Activated naive CD4-positive, alpha-beta T cell treated with anti-CD3 and anti-CD28 coated beads for 36 hours (primary cell): ENCODE measurements at regions of chr7 and their contacts with region 1.

Region 1: DNA sequence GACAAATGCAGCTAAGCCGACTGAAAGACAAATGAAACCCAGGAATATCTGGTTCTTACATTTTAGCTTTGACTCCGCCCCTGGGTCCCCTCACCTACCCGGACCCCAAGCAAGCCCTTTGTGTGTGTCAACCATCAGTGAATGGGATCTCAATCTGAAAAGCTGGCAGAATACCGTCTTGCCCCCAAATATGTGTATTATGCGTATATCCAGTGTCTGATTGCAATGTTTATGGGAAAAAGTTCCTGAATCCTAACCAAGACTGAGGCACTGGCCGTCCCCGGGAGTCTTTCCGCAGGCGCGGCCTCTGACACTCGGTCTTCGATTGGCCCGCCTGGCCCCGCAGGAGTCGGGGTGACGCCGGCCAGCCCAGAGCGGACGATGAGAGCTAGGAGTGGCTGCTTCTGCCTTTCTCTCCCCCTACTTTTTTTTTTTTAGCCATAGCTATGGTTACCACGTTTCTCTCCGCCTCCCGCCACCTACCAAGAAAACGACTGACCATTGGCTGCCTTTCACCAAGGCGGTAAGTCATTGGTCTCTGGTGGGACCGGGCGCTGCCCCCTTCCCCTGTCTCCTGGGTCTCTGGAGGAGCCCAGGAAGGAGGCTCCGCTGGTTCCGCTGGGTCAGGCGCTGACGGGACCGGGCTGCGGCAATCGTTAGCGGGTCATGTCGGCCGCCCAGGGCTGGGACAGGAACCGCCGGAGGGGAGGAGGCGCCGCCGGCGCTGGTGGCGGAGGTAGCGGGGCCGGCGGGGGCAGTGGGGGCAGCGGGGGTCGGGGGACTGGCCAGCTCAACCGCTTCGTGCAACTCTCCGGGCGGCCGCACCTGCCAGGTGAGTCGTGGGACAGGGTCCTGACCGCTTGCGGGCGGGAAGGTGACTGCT is at the start of gene KLHDC10:
- DNase-seq: peak; percentile 98
- H3K4me3 Mint-ChIP-seq: peak within 1 kb of the TSS; percentile 79
- H3K27ac Mint-ChIP-seq: peak within 1 kb of the TSS; percentile 70
- H3K4me1 Mint-ChIP-seq: peaks cover 38% of the 10 kb centered on the region
- H3K27me3 Mint-ChIP-seq: no peaks in the 10 kb centered on the region
- total RNA-seq, gene KLHDC10: 11.6 to 12.9 TPM

Region 2: DNA sequence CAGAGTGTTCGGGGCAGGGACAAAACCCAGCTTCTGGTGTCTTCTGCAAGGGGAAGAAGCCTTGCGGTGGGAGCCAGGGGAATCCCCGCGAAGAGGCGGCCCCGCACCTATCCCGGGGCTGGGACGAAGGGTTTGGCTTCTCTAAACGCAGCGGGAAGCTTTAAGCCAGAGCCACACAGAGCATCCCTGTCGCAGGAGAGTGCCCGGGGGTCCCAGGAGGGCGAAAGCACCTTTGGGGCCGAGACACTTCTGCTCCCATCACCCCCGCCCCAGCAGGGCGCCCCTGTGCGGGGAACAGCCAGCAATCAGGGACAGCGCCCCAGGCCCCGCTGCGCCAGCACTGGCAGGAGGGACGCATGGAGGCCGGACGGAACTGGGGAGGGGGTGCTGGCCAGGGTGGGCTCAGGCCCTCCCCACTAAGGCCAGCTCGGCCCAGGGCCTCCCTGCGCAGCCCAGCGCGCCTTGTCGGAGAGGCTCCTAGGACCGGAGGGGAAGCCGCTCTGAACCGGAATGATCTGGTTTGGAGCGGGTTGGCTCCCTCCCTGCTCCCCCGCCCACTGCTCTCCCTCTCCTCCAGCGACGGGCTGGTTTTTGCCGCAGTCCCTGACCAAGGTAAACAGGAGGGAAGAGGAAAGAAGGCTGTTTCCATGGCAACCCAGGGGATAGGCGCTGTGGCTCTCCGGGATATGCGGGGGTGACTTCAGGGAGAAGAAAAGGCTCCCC is 71.1 kb after region 1 on chr7:
- CTCF ChIA-PET with region 1: interaction called, 5 read pairs
- intact Hi-C with region 1: loop called (anchors 2 kb)
- DNase-seq: peak; percentile 71
- H3K4me3 Mint-ChIP-seq: peak overlapping the region; percentile 59
- H3K27ac Mint-ChIP-seq: peak overlapping the region; percentile 41
- H3K4me1 Mint-ChIP-seq: peaks cover 9% of the 10 kb centered on the region
- H3K27me3 Mint-ChIP-seq: no peaks in the 10 kb centered on the region

Region 3: DNA sequence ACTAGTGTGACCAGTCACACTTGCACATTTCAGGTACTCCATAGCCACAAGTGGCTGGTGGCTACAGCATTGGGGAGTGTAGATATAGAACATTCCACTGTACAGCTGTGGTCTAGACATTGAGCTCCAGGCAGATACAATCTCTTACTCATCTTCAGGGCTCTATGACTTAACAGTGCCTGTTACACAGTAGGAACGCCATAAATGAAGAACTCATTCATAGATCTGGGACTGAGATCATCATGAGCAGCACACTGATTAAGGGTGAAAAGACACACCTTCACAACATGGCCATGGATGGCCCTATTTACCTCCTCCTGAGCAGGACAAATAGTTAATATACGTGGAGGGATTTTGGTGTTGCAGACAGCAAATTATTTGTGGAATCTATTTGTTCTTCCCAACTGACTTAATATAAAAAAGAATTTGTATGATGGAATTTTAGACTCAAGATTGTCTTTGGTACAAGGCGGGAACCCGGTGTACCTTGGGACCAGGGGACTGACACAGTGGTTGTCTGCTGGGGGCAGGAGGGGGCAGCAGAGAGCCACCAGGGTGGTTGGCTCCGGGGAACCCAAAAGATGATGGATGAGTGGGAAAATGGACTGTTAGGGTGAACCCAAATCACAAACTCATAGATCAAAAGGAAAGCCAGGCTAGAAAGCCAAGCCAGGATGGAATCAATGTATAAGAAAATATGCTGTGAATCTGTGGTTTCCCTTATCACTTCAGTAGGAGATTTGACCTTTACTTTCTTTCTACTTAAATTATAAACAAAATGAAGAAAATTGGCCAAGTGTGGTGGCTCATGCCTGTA is 172.2 kb after region 1 on chr7:
- CTCF ChIA-PET with region 1: interaction called, 8 read pairs
- intact Hi-C with region 1: loop called (anchors 2 kb)
- DNase-seq: peak; percentile 76
- H3K4me3 Mint-ChIP-seq: no peak overlapping the region
- H3K27ac Mint-ChIP-seq: no peak overlapping the region
- H3K4me1 Mint-ChIP-seq: peaks cover 9% of the 10 kb centered on the region
- H3K27me3 Mint-ChIP-seq: no peaks in the 10 kb centered on the region

Region 4: DNA sequence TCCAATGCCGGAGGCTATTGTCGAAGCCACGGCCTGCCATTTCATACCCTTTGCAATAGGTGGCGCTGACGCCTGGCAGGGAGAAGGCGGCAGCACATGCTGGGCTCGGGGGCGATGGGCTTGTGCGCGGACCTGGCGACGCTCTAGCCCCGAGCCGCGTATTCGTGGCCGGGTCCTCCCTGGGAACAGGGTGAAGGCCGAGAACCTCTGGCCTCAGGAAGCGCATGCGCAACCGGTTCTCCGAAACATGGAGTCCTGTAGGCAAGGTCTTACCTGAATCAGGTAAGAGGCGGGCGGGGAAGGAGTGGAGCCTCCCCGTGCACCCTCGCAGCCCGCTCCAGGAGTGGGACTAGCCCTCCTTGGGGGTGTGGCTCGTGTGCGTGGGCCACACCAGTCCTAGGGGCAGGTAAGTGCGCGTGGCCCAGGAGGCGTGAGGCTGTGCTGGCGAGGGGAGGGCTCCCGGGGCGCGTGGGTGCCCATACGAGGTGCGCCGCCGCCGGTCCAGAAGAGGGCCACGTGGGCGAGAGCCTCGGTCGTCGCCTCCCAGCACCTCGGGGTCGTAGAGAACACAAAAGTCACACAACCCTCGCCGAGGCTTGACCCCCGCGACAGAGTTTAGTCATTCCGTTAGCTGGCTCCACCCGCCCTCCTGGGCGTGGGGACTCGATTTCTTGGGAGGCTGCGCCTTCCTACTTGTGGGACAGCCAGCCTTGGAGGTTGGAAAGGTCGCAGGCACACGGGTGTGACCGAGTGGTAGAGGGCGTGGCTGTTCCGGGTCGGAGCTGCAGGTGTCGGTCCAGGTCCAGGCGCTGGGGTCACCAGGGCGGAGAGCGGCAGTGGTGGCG is 416.1 kb after region 1 on chr7:
- CTCF ChIA-PET with region 1: no interaction called
- intact Hi-C with region 1: loop called (anchors 1 kb)
- DNase-seq: peak; percentile 70
- H3K4me3 Mint-ChIP-seq: peak overlapping the region; percentile 74
- H3K27ac Mint-ChIP-seq: no peak overlapping the region
- H3K4me1 Mint-ChIP-seq: peaks cover 23% of the 10 kb centered on the region
- H3K27me3 Mint-ChIP-seq: peaks cover 9% of the 10 kb centered on the region

Region 5: DNA sequence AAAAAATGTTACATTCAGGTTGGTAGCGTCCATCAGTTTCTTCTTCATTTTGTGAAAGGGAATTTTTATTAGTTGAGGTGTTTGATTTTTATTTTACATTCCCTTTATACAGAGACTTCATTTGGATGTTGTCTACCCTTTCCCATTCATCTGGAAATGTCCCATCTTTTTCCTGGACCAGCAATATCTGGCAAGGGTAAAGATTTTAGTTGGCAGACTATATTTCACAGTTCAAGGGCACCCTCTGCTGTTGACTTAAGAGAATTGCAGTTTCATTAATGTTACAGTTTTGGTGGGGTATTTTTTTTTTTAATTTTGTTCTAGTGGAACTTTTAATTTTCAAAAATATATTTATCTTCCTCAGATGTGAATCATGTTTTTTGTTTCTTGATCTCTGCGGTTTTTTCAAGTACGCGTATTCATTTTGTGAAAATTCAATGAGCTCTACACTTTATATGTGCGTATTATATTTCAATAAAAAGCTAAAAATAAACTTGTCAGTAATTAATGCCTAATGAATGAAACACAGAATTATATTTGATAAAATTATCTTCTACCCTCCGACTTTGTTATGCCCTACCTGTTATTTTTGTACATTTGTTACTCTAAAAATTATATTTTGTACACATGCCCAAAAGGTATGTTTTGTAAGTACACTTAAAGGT is 761.7 kb after region 1 on chr7:
- CTCF ChIA-PET with region 1: interaction called, 5 read pairs
- intact Hi-C with region 1: loop called (anchors 1 kb)
- DNase-seq: no peak
- H3K4me3 Mint-ChIP-seq: no peak overlapping the region
- H3K27ac Mint-ChIP-seq: no peak overlapping the region
- H3K4me1 Mint-ChIP-seq: no peaks in the 10 kb centered on the region
- H3K27me3 Mint-ChIP-seq: peaks cover 8% of the 10 kb centered on the region